ENCODE measurements at regions of chr19 and their contacts with region 1.

Region 1: DNA sequence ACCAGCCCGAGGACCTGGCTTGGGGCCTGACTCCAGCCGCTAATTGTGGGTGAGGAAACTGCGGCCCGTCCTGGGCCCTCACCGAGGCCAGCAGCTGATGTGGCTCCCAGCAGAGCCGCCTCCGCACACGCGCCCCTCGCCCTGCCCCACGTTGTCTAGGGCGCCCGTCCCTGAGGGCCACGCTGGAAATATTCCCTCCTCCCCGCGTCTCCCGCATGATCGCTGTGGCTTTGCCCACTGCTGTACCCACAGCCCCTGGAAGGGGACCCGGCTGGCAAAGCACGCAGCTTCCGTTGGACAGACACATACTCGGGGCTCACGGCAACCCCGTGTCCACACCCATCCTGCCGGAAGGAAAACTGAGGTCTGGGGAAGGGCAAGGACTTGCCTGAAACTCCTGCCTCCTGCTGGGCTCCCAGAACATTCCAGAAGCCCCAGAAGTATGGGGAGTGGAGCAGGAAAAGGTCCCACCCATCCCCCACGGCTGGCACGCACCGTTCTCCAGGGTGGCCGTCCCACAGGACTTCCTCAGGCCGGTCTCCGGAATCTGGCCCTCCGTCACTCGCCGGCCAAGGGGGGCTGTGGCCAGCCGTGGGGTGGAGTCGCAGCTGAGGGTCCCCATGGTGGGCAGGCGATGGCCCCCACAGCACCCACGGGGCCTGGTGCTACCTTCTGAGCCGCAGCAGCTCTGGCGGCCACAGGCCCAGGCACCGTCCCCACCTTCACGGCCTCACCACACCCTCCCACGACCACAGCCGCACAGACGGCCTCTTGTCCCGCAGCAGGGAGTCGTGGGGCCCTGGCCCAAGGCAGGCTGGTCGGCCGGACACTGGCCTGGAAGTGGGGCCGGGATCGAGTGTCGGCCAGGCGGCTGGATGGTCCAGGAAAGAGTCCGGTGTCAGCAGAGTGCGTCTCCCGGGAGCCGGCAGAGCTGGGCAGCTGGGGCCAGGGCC is 13.6 kb upstream of the SHC2 start:
- DNase-seq: peak; percentile 32 to 61
- ATAC-seq: peak; percentile 53 to 90 (median 76)
- H3K4me3 ChIP-seq: peak overlapping the region in 8 of 10 donors; percentile 0 to 34 (median 20)
- H3K27ac ChIP-seq: peak overlapping the region in 9 of 10 donors; percentile 42 to 85 (median 67)
- H3K4me1 ChIP-seq: peaks cover 0 to 14% (median 8%) of the 10 kb centered on the region in 9 donors
- H3K27me3 ChIP-seq: peaks cover 0 to 3% (median 0%) of the 10 kb centered on the region in 7 donors
- CTCF ChIP-seq: peak in 2 of 9 donors; percentile 13 to 26

Region 2: DNA sequence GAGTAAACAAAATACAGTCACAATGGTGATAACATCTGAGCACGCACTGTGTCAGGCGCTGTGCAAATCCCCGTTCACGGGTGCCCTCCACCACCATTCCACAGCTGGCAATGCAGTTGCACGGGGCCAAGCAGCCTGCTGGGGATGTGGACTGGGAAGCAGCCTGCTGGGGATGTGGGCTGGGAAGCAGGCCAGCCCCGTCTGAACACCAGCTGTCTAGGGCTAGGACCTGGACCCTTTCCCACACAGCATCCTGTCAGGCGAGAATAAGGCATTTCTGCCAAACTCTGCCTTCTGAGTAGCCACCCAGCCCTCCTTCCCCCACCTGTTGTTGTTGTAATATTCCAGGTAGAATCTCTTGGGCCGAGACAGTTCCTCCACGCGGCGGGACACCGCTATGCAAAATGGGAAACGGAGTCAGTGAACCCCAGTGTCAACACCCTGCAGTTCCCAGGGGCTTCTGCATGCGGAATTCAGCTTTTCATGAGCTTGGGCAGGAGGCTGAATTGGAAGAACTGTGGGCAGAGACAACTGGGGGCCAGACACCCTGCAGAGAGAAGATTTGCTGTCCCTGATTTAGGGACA is 102.0 kb before region 1 on chr19:
- intact Hi-C with region 1: loop called in 1 of 10 experiments (anchors 10 kb)
- DNase-seq: peak; percentile 70 to 72
- ATAC-seq: peak; percentile 71 to 94 (median 90)
- H3K4me3 ChIP-seq: peak overlapping the region in 1 of 10 donors; percentile 0
- H3K27ac ChIP-seq: peak overlapping the region in 2 of 10 donors; percentile 20 to 35
- H3K4me1 ChIP-seq: peaks cover 8 to 22% (median 15%) of the 10 kb centered on the region in 9 donors
- H3K27me3 ChIP-seq: peaks cover 0 to 66% (median 27%) of the 10 kb centered on the region in 7 donors
- CTCF ChIP-seq: no peak